ENCODE measurements at regions of chr13 and their contacts with region 1.

Region 1: DNA sequence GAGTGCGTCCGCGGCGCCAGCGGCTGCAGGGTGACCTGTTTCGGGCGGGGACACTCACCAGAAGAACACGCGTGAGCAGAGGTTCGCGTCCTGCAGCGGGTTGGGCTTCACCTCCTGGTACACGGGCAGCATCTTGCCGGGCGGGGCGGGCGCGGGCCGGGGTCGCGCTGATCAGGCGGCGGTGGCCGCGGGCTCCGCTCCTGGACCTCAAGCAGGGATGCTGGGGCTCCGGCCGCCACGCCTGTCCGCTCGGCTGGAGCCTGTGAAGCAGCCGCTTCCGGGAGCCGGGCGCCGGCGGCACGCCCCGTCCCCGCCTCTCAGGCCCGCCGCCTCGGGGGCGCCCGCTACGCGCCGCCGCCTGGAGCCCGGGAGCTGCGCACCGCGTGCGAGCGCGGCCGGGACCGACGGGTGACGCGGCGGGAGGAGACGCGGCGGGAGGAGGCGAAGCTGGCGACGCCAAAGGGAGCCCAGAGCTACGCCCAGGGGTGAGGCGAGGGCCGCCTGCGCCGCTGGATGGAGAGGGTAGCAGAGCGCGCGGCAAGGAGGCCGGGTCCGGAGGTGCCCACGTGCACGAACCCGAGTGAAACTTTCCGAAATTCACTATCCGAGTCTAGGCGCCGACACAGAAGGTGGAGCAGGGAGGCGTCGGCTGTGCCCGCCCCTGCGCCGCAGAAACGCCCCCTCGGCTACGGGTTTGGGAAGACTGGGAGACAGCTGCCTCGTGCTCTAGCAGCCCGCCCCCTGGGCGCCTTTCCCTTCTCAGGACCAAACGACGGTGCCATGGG is at the start of gene ABCC4:
- DNase-seq: peak; percentile 51
- H3K4me3 Mint-ChIP-seq: peak within 1 kb of the TSS; percentile 95
- H3K27ac Mint-ChIP-seq: peak within 1 kb of the TSS; percentile 82
- H3K4me1 Mint-ChIP-seq: peaks cover 33% of the 10 kb centered on the region
- H3K27me3 Mint-ChIP-seq: peaks cover 15% of the 10 kb centered on the region
- total RNA-seq, gene ABCC4: 16.4 and 20.2 TPM in 2 replicates

Region 2: DNA sequence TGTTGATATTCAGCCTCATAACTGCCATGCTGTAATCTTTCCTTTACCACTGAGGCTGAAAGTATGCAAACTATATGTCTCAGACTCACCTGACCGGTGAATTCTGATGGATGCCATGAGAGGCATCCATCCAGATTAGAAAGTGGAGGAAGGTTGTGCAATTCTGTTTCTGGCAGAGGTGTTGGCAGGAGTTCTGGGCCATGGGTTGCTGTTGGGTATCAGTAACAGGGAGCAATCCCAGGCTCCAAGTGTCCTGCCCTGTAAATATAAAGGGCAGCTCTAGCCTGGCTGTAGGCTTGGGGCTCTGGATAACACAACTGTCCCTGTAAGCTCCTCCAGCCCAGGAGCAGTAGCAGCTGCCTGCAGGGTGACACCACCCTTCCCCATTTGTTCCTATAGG is 77.2 kb after region 1 on chr13:
- intact Hi-C with region 1: loop called (anchors 1 kb)
- DNase-seq: no peak
- H3K4me3 Mint-ChIP-seq: no peak overlapping the region
- H3K27ac Mint-ChIP-seq: no peak overlapping the region
- H3K4me1 Mint-ChIP-seq: no peaks in the 10 kb centered on the region
- H3K27me3 Mint-ChIP-seq: peaks cover 5% of the 10 kb centered on the region

Region 3: GRCh38 chr13:95480131-95480545 is 178.8 kb after region 1 on chr13:
- intact Hi-C with region 1: loop called (anchors 5 kb)
- DNase-seq: no peak
- H3K4me3 Mint-ChIP-seq: peak overlapping the region; percentile 21
- H3K27ac Mint-ChIP-seq: peak overlapping the region; percentile 23
- H3K4me1 Mint-ChIP-seq: peaks cover 25% of the 10 kb centered on the region
- H3K27me3 Mint-ChIP-seq: peaks cover 6% of the 10 kb centered on the region